Panc1 (cell line): ENCODE measurements at regions of chr11 and their contacts with region 1.

Region 1: DNA sequence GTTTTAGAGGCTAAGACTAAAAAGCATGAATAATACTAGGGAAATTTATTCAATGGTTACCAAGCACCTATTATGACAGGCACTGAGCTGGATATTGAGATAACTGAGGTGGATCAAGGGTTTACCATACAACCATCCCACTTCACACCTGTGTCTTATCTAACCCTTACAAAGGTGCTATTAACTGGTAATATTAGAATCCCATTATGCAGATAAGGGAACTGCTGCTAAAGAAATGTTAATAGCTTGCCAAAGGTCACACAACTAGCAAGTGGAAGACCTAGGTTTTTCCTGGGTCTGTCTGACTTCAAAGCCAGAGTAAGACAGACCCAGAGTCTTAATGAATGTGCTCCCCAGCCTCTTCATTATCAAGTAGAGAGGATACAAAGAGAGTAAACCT is 21.1 kb upstream of the VSTM5 start:
- DNase-seq: no peak
- ATAC-seq: no peak
- H3K4me3 ChIP-seq: no peak overlapping the region
- H3K27ac ChIP-seq: no peak overlapping the region
- H3K4me1 ChIP-seq: no peaks in the 10 kb centered on the region
- H3K27me3 ChIP-seq: no peaks in the 10 kb centered on the region
- CTCF ChIP-seq: no peak

Region 2: GRCh38 chr11:93614173-93614722 is 257.3 kb before region 1 on chr11:
- CTCF ChIA-PET with region 1: no interaction called
- POLR2A ChIA-PET with region 1: no interaction called
- in situ Hi-C with region 1: no loop called
- intact Hi-C with region 1: no loop called
- DNase-seq: no peak
- ATAC-seq: peak; percentile 74
- H3K4me3 ChIP-seq: no peak overlapping the region
- H3K27ac ChIP-seq: no peak overlapping the region
- H3K4me1 ChIP-seq: no peaks in the 10 kb centered on the region
- H3K27me3 ChIP-seq: peaks cover 3% of the 10 kb centered on the region; the same call in 1 of the 2 replicates
- CTCF ChIP-seq: peak; percentile 41

Region 3: GRCh38 chr11:93817426-93818348 is 53.8 kb before region 1 on chr11:
- CTCF ChIA-PET with region 1: no interaction called
- POLR2A ChIA-PET with region 1: no interaction called
- in situ Hi-C with region 1: no loop called
- intact Hi-C with region 1: no loop called
- DNase-seq: no peak
- ATAC-seq: peak; percentile 25; the same call in 1 of the 2 replicates
- H3K4me3 ChIP-seq: no peak overlapping the region
- H3K27ac ChIP-seq: no peak overlapping the region
- H3K4me1 ChIP-seq: no peaks in the 10 kb centered on the region
- H3K27me3 ChIP-seq: no peaks in the 10 kb centered on the region
- CTCF ChIP-seq: no peak

Region 4: DNA sequence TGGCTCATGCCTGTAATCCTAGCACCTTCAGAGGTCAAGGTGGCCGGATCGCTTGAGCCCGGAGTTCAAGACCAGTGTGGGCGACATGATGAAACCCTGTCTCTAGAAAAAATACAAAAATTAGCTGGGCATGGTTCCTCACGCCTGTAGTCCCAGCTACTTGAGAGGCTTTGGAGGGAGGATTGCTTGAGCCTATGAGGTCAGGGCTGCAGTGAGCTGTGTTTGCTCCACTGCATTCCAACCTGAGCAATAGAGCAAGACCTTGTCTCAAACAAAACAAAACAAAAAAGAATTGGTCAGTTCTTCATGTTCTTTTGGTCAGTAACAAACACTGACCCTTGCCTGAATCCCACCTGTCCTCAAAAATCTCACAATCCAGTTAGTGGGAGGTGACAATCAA is 15.6 kb after region 1 on chr11:
- CTCF ChIA-PET with region 1: no interaction called
- POLR2A ChIA-PET with region 1: interaction called, 11 read pairs
- in situ Hi-C with region 1: no loop called
- intact Hi-C with region 1: no loop called
- DNase-seq: no peak
- ATAC-seq: no peak
- H3K4me3 ChIP-seq: no peak overlapping the region
- H3K27ac ChIP-seq: no peak overlapping the region
- H3K4me1 ChIP-seq: no peaks in the 10 kb centered on the region
- H3K27me3 ChIP-seq: peaks cover 7% of the 10 kb centered on the region
- CTCF ChIP-seq: no peak

Region 5: DNA sequence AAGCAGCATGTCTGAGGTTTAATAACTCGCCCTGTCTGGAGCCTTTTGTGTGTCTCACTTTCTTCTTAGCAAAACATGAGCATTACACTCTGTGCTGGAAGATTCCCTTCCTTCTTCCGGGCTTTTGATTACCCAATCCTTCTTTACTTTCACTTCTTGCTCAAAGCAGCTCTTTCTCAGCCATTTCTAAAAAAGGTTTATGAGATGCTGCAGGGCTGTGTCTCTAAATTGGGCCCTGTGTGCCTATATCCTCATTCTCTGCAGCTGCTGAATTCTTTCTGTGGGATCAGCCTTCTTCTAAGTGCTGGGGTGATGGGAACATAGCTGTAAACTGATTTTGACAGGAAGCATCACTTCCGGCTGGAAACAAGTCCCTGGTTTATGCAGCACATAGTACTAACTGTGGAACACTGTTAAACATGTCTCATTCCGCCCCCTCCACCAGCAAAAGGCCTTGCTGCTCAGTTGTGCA is 767.4 kb after region 1 on chr11:
- CTCF ChIA-PET with region 1: no interaction called
- POLR2A ChIA-PET with region 1: no interaction called
- in situ Hi-C with region 1: no loop called
- intact Hi-C with region 1: no loop called
- DNase-seq: no peak
- ATAC-seq: peak; percentile 35; the same call in 1 of the 2 replicates
- H3K4me3 ChIP-seq: no peak overlapping the region
- H3K27ac ChIP-seq: no peak overlapping the region
- H3K4me1 ChIP-seq: peaks cover 3% of the 10 kb centered on the region; the same call in 1 of the 2 replicates
- H3K27me3 ChIP-seq: no peaks in the 10 kb centered on the region
- CTCF ChIP-seq: no peak